Activated naive CD4-positive, alpha-beta T cell treated with anti-CD3 and anti-CD28 coated beads, Interleukin-2, amount 10 ng/mL, durations not matched to agents 7 days and 5 days (primary cell): ENCODE measurements at regions of chr1 and their contacts with region 1.

Region 1: DNA sequence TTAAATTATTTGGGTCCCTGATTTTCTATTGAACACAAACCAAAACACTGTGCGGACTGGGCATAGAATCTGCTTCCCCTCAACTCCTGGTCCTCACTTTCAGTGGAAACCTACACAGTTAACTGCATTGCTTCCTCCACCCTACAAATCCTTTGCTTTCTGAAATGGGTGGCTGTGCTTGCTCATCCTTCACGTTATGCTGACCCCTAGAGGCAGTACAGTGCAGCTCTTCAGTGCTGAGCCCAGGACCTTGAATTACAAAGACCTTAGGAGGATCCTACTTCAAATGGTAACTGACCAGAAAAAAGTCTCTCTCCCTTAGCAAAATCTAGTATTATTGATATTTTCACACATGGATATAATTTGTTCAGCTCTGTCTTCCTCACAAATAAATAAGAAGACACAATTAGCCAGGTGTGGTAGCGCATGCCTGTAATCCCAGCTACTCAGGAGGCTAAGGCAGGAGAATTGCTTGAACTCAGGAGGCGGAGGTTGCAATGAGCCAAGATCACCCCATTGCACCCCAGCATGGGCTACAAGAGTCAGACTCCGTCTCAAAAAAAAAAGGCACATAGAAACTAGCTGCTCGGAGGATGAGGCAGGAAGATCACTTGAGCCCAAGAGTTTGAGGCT is 63.4 kb upstream of the L1TD1 start:
- DNase-seq: peak; percentile 51
- H3K4me3 Mint-ChIP-seq: no peak overlapping the region
- H3K27ac Mint-ChIP-seq: peak overlapping the region; percentile 2
- H3K4me1 Mint-ChIP-seq: no peaks in the 10 kb centered on the region
- H3K27me3 Mint-ChIP-seq: no peaks in the 10 kb centered on the region

Region 2: GRCh38 chr1:62082456-62083363 is 48.5 kb before region 1 on chr1:
- CTCF ChIA-PET with region 1: interaction called, 11 read pairs
- DNase-seq: peak; percentile 53
- H3K4me3 Mint-ChIP-seq: no peak overlapping the region
- H3K27ac Mint-ChIP-seq: no peak overlapping the region
- H3K4me1 Mint-ChIP-seq: no peaks in the 10 kb centered on the region
- H3K27me3 Mint-ChIP-seq: no peaks in the 10 kb centered on the region

Region 3: GRCh38 chr1:62117018-62117750 is 14.0 kb before region 1 on chr1:
- CTCF ChIA-PET with region 1: interaction called, 12 read pairs
- DNase-seq: no peak
- H3K4me3 Mint-ChIP-seq: no peak overlapping the region
- H3K27ac Mint-ChIP-seq: no peak overlapping the region
- H3K4me1 Mint-ChIP-seq: no peaks in the 10 kb centered on the region
- H3K27me3 Mint-ChIP-seq: no peaks in the 10 kb centered on the region

Region 4: GRCh38 chr1:62144238-62144831 is 13.1 kb after region 1 on chr1:
- CTCF ChIA-PET with region 1: interaction called, 12 read pairs
- DNase-seq: peak; percentile 54
- H3K4me3 Mint-ChIP-seq: no peak overlapping the region
- H3K27ac Mint-ChIP-seq: no peak overlapping the region
- H3K4me1 Mint-ChIP-seq: peaks cover 2% of the 10 kb centered on the region
- H3K27me3 Mint-ChIP-seq: no peaks in the 10 kb centered on the region

Region 5: DNA sequence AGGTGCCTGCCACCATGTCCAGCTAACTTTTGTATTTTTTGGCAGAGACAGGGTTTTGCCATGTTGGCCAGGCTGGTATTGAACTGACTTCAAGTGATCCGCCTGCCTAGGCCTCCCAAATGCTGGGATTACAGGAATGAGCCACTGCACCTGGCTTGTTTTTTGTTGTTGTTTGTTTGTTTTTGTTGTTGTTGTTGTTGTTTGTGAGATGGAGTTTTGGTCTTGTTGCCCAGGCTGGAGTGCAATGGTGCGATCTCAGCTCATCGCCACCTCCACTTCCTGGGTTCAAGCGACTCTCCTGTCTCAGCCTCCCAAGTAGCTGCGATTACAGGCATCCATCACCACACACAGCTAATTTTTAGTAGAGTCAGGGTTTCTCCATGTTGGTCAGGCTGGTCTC is 56.3 kb after region 1 on chr1:
- CTCF ChIA-PET with region 1: no interaction called
- DNase-seq: no peak
- H3K4me3 Mint-ChIP-seq: no peak overlapping the region
- H3K27ac Mint-ChIP-seq: no peak overlapping the region
- H3K4me1 Mint-ChIP-seq: no peaks in the 10 kb centered on the region
- H3K27me3 Mint-ChIP-seq: no peaks in the 10 kb centered on the region

Region 6: GRCh38 chr1:62209931-62210595 is 78.9 kb after region 1 on chr1:
- CTCF ChIA-PET with region 1: no interaction called
- DNase-seq: no peak
- H3K4me3 Mint-ChIP-seq: no peak overlapping the region
- H3K27ac Mint-ChIP-seq: no peak overlapping the region
- H3K4me1 Mint-ChIP-seq: peaks cover 4% of the 10 kb centered on the region
- H3K27me3 Mint-ChIP-seq: peaks cover 3% of the 10 kb centered on the region

Region 7: DNA sequence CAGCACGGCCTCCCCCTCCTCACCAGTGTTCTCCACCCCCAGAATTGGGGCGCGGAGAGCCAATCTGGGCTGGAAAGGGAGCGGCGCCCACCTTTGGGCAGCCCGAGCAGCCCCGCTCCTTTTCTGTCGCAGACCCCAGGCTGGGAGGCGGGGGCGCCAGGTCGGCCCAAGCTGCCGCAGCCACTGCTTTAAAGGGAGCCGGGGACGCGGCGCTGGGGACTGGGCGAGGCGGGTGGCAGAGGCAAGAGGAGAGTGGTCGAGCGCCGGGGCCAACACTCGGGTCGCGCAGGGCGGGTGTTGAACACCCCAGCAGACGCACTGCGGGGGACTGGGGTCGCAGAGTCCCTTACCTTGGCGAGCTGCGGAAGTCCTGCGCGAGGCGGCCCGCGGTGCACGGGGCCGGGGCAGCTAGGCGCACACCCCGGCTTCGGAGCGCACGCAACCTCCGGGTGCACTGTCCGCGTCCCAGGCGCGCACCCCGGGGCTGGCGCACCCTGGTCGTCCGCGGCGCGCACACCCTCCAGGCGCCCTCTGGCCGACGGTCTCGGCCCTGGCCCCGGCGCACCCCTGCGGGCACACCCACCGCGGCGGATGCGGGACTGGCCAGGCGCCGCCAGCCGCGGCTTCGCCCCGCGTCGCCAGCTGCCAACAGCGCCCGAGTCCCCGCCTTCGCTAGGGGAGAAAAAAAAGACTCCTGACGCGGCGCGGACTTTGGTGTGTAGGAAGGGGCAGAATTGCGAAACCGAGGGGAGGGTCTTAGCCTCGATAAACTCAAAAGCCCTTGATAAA is 187.7 kb after region 1 on chr1 and contains the start of gene KANK4:
- CTCF ChIA-PET with region 1: no interaction called
- DNase-seq: no peak
- H3K4me3 Mint-ChIP-seq: no peak within 1 kb of the TSS
- H3K27ac Mint-ChIP-seq: no peak within 1 kb of the TSS
- H3K4me1 Mint-ChIP-seq: peaks cover 3% of the 10 kb centered on the region
- H3K27me3 Mint-ChIP-seq: peaks cover 56% of the 10 kb centered on the region

Region 8: DNA sequence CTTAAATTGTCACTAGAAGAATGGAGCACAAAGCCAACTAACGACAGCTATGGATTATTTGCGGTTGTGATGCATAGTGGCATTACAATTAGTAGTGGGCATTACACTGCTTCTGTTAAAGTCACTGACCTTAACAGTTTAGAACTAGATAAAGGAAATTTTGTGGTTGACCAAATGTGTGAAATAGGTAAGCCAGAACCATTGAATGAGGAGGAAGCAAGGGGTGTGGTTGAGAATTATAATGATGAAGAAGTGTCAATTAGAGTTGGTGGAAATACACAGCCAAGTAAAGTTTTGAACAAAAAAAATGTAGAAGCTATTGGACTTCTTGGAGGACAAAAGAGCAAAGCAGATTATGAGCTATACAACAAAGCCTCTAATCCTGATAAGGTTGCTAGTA is 319.1 kb after region 1 on chr1:
- CTCF ChIA-PET with region 1: no interaction called
- DNase-seq: no peak
- H3K4me3 Mint-ChIP-seq: no peak overlapping the region
- H3K27ac Mint-ChIP-seq: peak overlapping the region; percentile 56
- H3K4me1 Mint-ChIP-seq: peaks cover 31% of the 10 kb centered on the region
- H3K27me3 Mint-ChIP-seq: no peaks in the 10 kb centered on the region